Activated CD4-positive, alpha-beta memory T cell treated with anti-CD3 and anti-CD28 coated beads for 36 hours (primary cell): ENCODE measurements at regions of chr16 and their contacts with region 1.

Region 1: DNA sequence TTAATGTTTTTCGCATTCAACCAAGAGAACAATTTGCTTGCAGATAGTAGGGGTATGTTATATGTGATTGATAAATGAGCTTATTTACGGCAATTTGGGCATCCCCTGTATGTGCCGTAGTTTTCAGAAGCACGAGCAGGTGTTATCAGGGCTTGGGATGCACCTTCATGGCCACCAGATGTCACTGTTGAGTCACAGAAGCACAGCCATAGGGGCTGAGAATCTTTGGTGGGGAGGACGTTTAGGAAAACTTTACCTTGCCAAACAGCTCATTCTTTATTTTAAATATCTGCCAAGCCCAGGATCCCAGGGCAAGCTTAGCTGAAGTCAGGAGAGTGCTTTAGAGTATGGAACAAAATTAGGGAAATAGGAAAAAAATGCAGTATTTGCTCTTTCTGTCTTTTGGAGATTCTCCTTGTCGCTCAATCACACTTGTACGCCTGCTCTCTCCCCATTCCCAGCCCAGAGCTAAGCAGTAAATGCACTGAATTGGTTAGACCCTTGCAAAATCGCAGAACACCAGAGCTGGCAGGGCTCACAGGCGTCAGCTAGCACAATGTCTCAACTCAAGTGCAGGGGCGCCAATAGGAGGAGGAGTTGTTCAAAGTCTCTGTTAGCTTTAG is 93.6 kb upstream of the MPHOSPH6 start:
- DNase-seq: peak; percentile 60
- H3K4me3 Mint-ChIP-seq: no peak overlapping the region
- H3K27ac Mint-ChIP-seq: no peak overlapping the region
- H3K4me1 Mint-ChIP-seq: no peaks in the 10 kb centered on the region
- H3K27me3 Mint-ChIP-seq: peaks cover 11% of the 10 kb centered on the region

Region 2: DNA sequence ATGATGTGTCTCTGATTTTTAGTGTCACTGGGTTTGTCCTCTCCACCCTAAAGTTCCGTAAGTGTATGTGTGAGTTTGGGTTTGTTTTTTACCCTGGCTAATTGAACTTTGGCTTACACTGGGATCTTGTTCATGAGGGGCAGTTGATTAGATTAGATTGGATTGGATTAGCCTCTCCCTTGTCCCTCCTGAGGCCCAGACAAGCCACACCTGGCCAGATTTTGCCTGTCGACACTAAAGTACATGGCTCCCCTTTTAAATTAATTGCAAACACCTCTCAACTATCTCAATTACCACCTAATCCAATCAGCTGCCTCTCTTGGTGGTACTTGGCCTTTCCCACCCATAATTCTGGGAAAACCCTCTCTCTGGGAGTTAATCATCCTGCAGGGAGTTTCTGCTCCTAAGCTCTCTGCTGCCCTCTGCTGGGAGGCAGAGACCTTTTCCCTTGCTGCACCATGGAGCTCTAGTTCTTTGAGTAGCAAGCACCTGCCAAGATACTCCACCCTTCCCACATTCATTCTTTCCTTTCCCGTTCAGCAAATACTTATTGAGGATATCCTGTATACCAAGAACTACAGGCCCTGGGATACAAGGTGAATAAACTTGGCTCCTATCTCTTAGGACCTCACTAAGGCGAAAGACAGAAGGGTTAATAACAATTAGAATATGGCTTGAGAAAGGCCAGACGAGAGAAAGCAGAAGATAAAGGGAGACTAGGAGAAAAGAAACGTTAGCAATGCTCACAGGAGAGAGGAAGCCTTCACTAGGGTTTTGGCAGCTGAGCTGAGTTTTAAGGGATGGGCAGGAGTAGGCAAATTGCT is 33.6 kb before region 1 on chr16:
- CTCF ChIA-PET with region 1: interaction called, 14 read pairs
- POLR2A ChIA-PET with region 1: no interaction called
- intact Hi-C with region 1: no loop called
- DNase-seq: peak; percentile 70
- H3K4me3 Mint-ChIP-seq: no peak overlapping the region
- H3K27ac Mint-ChIP-seq: no peak overlapping the region
- H3K4me1 Mint-ChIP-seq: no peaks in the 10 kb centered on the region
- H3K27me3 Mint-ChIP-seq: peaks cover 10% of the 10 kb centered on the region

Region 3: GRCh38 chr16:82344157-82344556 is 80.5 kb after region 1 on chr16:
- CTCF ChIA-PET with region 1: interaction called, 12 read pairs
- POLR2A ChIA-PET with region 1: no interaction called
- intact Hi-C with region 1: no loop called
- DNase-seq: no peak
- H3K4me3 Mint-ChIP-seq: no peak overlapping the region
- H3K27ac Mint-ChIP-seq: no peak overlapping the region
- H3K4me1 Mint-ChIP-seq: no peaks in the 10 kb centered on the region
- H3K27me3 Mint-ChIP-seq: peaks cover 10% of the 10 kb centered on the region

Region 4: DNA sequence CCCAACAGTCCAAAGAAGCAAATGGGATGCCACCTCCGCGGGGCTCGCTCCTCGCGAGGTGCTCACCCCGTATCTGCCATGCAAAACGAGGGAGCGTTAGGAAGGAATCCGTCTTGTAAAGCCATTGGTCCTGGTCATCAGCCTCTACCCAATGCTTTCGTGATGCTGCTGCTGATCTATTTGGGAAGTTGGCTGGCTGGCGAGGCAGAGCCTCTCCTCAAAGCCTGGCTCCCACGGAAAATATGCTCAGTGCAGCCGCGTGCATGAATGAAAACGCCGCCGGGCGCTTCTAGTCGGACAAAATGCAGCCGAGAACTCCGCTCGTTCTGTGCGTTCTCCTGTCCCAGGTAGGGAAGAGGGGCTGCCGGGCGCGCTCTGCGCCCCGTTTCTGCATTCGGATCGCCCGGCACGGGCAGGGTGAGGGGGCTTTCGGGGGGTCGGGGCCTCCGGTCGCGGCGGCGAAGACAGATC is 363.2 kb after region 1 on chr16 and contains the start of gene CDH13:
- CTCF ChIA-PET with region 1: interaction called, 9 read pairs
- POLR2A ChIA-PET with region 1: no interaction called
- intact Hi-C with region 1: loop called (anchors 2 kb)
- DNase-seq: no peak
- H3K4me3 Mint-ChIP-seq: no peak within 1 kb of the TSS
- H3K27ac Mint-ChIP-seq: no peak within 1 kb of the TSS
- H3K4me1 Mint-ChIP-seq: peaks cover 2% of the 10 kb centered on the region
- H3K27me3 Mint-ChIP-seq: peaks cover 61% of the 10 kb centered on the region
- total RNA-seq, gene CDH13: not detected

Region 5: GRCh38 chr16:83215406-83216001 is 951.9 kb after region 1 on chr16:
- CTCF ChIA-PET with region 1: interaction called, 15 read pairs
- POLR2A ChIA-PET with region 1: no interaction called
- intact Hi-C with region 1: loop called (anchors 5 kb)
- DNase-seq: peak; percentile 68
- H3K4me3 Mint-ChIP-seq: no peak overlapping the region
- H3K27ac Mint-ChIP-seq: no peak overlapping the region
- H3K4me1 Mint-ChIP-seq: no peaks in the 10 kb centered on the region
- H3K27me3 Mint-ChIP-seq: no peaks in the 10 kb centered on the region